PC-9 (cell line): ENCODE measurements at regions of chr10 and their contacts with region 1.

Region 1: GRCh38 chr10:3887885-3888476 is 103.0 kb upstream of the KLF6 start:
- DNase-seq: peak; percentile 50 to 89
- H3K4me3 ChIP-seq: no peak overlapping the region
- H3K27ac ChIP-seq: peak overlapping the region; percentile 90
- H3K4me1 ChIP-seq: peaks cover 41% of the 10 kb centered on the region
- H3K27me3 ChIP-seq: no peaks in the 10 kb centered on the region
- CTCF ChIP-seq: no peak

Region 2: GRCh38 chr10:3948843-3949242 is 60.9 kb after region 1 on chr10:
- CTCF ChIA-PET with region 1: no interaction called
- POLR2A ChIA-PET with region 1: no interaction called
- intact Hi-C with region 1: loop called (anchors 5 kb)
- DNase-seq: no peak
- H3K4me3 ChIP-seq: no peak overlapping the region
- H3K27ac ChIP-seq: no peak overlapping the region
- H3K4me1 ChIP-seq: peaks cover 23% of the 10 kb centered on the region
- H3K27me3 ChIP-seq: no peaks in the 10 kb centered on the region
- CTCF ChIP-seq: no peak

Region 3: DNA sequence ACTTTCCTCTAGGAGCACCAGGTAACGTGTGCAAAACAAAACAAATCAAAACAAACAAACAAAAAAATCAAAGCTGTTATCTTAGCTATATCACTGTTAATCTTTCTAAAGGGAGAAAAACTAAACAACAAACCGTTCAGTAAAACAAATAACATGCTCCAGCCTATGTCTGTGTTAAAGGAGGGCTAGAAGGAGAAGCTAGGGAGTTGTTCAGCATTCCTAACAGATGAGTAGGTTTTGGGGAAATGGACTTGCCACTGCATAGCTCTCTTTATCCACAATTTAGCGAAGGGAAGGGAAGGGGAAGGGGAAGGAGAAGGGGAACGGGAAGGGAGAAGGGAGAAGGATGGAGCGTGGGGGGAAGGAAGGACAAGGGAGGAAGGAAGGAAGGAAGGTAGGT is 803.8 kb after region 1 on chr10:
- CTCF ChIA-PET with region 1: no interaction called
- POLR2A ChIA-PET with region 1: interaction called, 20 read pairs
- intact Hi-C with region 1: no loop called
- DNase-seq: peak in 1 of 2 experiments; percentile 54
- H3K4me3 ChIP-seq: no peak overlapping the region
- H3K27ac ChIP-seq: 0 out of 2 replicates have a peak overlapping the region, but pooled peaks have one; percentile 19
- H3K4me1 ChIP-seq: peaks cover 15% of the 10 kb centered on the region
- H3K27me3 ChIP-seq: no peaks in the 10 kb centered on the region
- CTCF ChIP-seq: no peak